A549 (cell line): ENCODE measurements at regions of chr11 and their contacts with region 1.

Region 1: GRCh38 chr11:18540207-18541009 is 13.7 kb upstream of the TSG101 start:
- DNase-seq: peak in 1 of 2 experiments; percentile 48
- ATAC-seq: peak; percentile 81 to 87; a peak in 5 of 6 replicates
- H3K4me3 ChIP-seq: no peak overlapping the region
- H3K27ac ChIP-seq: no peak overlapping the region
- H3K4me1 ChIP-seq: no peaks in the 10 kb centered on the region
- CTCF ChIP-seq: peak; percentile 77
- EP300 ChIP-seq: no peak
- POLR2A ChIP-seq: no peak
- RAD21 ChIP-seq: peak; percentile 73 to 74

Region 2: DNA sequence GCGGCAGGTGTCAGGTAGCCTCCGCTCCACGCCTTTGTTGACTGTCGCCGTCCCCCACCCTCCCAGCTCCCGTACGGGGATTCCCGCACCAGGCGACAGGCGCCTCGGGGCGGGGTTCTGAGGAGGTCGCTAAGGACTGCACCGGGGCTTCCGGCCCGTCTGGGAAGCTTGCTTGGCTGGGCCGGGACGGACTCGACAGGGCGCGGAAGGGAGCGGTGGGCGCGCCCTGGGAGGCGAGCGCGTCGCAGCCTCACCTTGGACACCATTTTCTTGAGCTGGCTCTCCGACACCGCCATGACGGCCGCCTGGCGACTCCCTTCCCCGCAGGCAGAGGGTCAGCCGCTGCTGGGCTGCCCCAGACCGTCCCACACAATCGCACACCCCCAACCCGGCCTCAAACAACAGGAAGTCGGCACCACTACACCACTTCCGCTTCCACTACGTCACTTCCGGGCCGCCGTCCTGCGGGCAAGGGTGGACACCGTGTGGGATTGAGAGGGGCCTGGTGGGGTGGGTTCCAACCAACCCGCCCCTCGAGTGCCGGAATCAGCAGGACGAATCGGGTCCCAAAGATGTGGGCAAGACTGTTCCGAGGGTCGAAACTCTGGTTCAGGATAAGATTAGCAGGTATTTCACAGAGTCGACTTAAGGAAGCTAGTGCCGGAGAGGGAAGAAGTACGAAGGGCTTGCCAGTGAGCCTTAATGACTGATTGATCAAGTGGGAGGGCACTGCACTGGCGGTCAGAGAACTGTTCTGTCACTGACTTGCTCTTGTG is 13.7 kb before region 1 on chr11 and contains the start of gene TSG101:
- CTCF ChIA-PET with region 1: interaction called, 10 read pairs
- POLR2A ChIA-PET with region 1: interaction called, 4 read pairs
- DNase-seq: peak; percentile 93 to 97
- ATAC-seq: peak; percentile 97 to 98
- H3K4me3 ChIP-seq: peak within 1 kb of the TSS; percentile 81
- H3K27ac ChIP-seq: peak within 1 kb of the TSS; percentile 92 to 96
- H3K4me1 ChIP-seq: peaks cover 46% of the 10 kb centered on the region
- CTCF ChIP-seq: no peak
- EP300 ChIP-seq: 0 out of 5 replicates have a peak, but pooled peaks of 1 of the 2 experiments have one; percentile 9
- POLR2A ChIP-seq: peak; percentile 91
- RAD21 ChIP-seq: no peak
- polyA plus RNA-seq, gene TSG101: 161 and 233 TPM in 2 replicates

Region 3: DNA sequence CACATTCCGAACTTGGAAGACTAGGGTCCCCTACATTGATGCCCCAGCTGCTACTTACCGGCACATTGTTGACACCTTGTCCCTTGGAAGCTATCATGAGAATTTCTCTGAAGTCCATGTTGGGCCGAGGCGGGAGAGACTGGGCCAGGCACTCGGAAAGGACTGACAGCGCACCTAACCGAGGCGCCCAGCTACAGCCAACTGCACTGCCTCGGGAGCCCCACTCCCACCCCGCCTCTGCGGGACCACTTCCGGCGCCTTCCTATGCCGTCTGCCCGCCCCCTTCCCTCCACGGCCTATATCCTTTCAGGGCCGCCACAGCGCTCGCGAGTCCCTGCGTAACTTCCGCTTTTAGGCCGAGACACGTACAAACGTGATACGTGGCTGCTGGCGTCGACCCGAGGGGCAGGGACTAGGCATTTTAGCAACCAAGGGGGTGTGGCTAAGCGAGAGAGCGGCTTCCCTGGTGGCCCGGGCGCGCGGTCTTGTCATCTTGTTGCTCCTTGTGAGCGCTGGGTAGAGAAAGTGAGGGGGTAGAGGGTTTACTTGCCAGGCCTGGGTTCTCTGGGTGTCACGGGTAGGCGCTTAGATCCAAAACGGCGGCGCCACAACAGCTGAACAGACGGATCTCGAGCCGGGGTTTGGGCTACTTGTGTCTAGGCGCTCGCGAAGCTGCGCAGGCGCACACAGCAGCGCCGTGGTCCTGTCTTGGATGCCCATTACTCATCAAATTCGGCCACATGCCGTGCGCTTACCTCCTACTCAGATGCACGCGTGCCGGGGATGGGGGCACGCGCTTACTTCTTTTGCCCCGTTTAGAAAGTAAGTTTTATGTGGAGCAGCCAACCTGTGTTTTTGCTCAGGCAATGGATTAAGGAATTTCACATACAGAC is 94.0 kb after region 1 on chr11 and contains the start of gene SPTY2D1:
- CTCF ChIA-PET with region 1: no interaction called
- POLR2A ChIA-PET with region 1: no interaction called
- DNase-seq: peak; percentile 96 to 99
- ATAC-seq: peak; percentile 98 to 99
- H3K4me3 ChIP-seq: peak within 1 kb of the TSS; percentile 74
- H3K27ac ChIP-seq: peak within 1 kb of the TSS; percentile 85 to 92
- H3K4me1 ChIP-seq: peaks cover 11% of the 10 kb centered on the region
- CTCF ChIP-seq: no peak
- EP300 ChIP-seq: peak in 1 of 2 experiments; percentile 11; a peak in 1 of 5 replicates
- POLR2A ChIP-seq: peak; percentile 68
- RAD21 ChIP-seq: no peak
- polyA plus RNA-seq, gene SPTY2D1: 16.2 and 24.6 TPM in 2 replicates

Region 4: DNA sequence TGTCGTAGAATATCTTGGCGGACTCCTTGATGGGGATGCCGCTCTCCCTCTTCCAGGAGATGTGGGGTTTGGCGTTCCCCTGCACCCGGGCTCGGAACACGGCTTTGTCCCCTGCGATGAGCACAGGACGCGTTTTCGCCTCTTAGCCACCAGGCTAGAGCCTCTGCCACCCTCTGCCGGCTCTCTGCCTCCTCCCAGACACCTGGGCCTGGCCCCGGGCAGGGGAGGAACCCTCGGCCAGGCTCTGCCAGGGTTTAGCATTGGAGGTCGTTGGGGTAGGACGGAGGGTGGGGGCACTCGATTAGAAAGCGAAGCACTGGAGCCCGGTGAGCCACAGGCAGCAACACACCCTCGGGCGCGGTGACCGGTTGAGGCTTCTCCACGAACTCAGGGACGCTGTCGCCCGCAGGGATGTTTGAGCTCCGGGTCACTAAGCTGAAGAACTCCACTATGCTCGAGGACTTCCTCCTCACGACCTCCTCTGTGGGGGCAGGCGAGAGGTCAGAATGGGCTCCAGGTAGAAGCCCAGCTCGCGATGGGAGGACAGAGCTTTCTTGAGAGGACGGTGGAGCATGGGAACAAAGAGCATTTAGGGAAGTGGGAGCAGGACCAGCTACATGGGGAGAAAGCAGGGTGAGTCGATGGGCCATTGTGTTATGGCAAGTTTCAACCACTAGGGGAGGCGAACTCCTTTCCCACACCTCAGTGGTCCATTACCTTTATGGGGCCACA is 181.3 kb after region 1 on chr11:
- CTCF ChIA-PET with region 1: interaction called, 14 read pairs
- POLR2A ChIA-PET with region 1: no interaction called
- DNase-seq: peak; percentile 64 to 75
- ATAC-seq: peak; percentile 77 to 88
- H3K4me3 ChIP-seq: peak overlapping the region; percentile 64
- H3K27ac ChIP-seq: peak overlapping the region; percentile 18 to 77
- H3K4me1 ChIP-seq: no peaks in the 10 kb centered on the region
- CTCF ChIP-seq: peak; percentile 54
- EP300 ChIP-seq: no peak
- POLR2A ChIP-seq: no peak
- RAD21 ChIP-seq: peak; percentile 17 to 41; a peak in 1 of 5 replicates

Region 5: GRCh38 chr11:18757811-18758210 is 217.4 kb after region 1 on chr11:
- CTCF ChIA-PET with region 1: interaction called, 11 read pairs
- POLR2A ChIA-PET with region 1: no interaction called
- DNase-seq: no peak
- ATAC-seq: no peak
- H3K4me3 ChIP-seq: no peak overlapping the region
- H3K27ac ChIP-seq: no peak overlapping the region
- H3K4me1 ChIP-seq: peaks cover 12% of the 10 kb centered on the region; the same call in 1 of the 3 replicates
- CTCF ChIP-seq: no peak
- EP300 ChIP-seq: no peak
- POLR2A ChIP-seq: no peak
- RAD21 ChIP-seq: no peak

Region 6: GRCh38 chr11:18768472-18768901 is 228.1 kb after region 1 on chr11:
- CTCF ChIA-PET with region 1: interaction called, 21 read pairs
- POLR2A ChIA-PET with region 1: interaction called, 3 read pairs
- DNase-seq: no peak
- ATAC-seq: no peak
- H3K4me3 ChIP-seq: no peak overlapping the region
- H3K27ac ChIP-seq: no peak overlapping the region
- H3K4me1 ChIP-seq: peaks cover 11% of the 10 kb centered on the region
- CTCF ChIP-seq: no peak
- EP300 ChIP-seq: no peak
- POLR2A ChIP-seq: no peak
- RAD21 ChIP-seq: no peak

Region 7: GRCh38 chr11:18775492-18776292 is 235.3 kb after region 1 on chr11:
- CTCF ChIA-PET with region 1: interaction called, 10 read pairs
- POLR2A ChIA-PET with region 1: no interaction called
- DNase-seq: peak; percentile 65 to 76
- ATAC-seq: peak; percentile 91 to 97
- H3K4me3 ChIP-seq: no peak overlapping the region
- H3K27ac ChIP-seq: no peak overlapping the region
- H3K4me1 ChIP-seq: no peaks in the 10 kb centered on the region
- CTCF ChIP-seq: peak; percentile 80
- EP300 ChIP-seq: no peak
- POLR2A ChIP-seq: no peak
- RAD21 ChIP-seq: peak; percentile 65 to 80